PC-9 (cell line): ENCODE measurements at regions of chr21 and their contacts with region 1.

Region 1: DNA sequence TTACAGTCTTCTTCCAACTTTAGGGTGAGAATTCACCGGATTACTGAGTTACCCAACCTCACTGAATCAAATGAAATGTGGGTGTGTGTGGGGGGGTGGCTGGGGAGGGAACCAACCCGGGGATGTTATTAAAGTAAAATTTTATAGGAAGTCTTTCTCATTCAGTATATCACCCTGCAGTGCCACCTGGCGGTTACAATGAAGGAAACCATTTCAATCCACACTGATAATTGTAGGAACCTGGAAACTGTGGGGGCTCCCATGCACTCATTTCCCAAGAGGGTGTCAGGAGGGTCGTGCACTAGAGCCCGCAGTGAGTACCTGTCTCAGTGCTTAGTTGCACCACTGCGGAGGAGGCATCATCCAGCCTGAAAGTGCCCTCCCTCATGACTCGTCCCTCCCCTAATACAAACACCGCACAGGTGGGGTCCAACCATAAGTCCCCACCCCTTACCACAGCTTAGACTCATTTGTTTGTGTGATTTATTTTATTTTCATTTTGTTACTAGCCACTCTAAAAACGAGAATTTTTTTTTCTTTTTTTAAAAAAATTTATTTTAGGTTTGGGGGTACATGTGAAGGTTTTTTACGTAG is 29.1 kb upstream of the IGSF5 start:
- DNase-seq: peak in 1 of 2 experiments; percentile 20
- H3K4me3 ChIP-seq: no peak overlapping the region
- H3K27ac ChIP-seq: no peak overlapping the region
- H3K4me1 ChIP-seq: no peaks in the 10 kb centered on the region
- H3K27me3 ChIP-seq: peaks cover 8% of the 10 kb centered on the region
- CTCF ChIP-seq: peak; percentile 72

Region 2: GRCh38 chr21:39518138-39518846 is 197.6 kb before region 1 on chr21:
- CTCF ChIA-PET with region 1: interaction called, 4 read pairs
- POLR2A ChIA-PET with region 1: no interaction called
- intact Hi-C with region 1: loop called (anchors 1 kb)
- DNase-seq: peak; percentile 38 to 40
- H3K4me3 ChIP-seq: no peak overlapping the region
- H3K27ac ChIP-seq: no peak overlapping the region
- H3K4me1 ChIP-seq: no peaks in the 10 kb centered on the region
- H3K27me3 ChIP-seq: no peaks in the 10 kb centered on the region
- CTCF ChIP-seq: peak; percentile 93

Region 3: GRCh38 chr21:39705849-39706248 is 10.1 kb before region 1 on chr21:
- CTCF ChIA-PET with region 1: no interaction called
- POLR2A ChIA-PET with region 1: no interaction called
- intact Hi-C with region 1: no loop called
- DNase-seq: no peak
- H3K4me3 ChIP-seq: no peak overlapping the region
- H3K27ac ChIP-seq: no peak overlapping the region
- H3K4me1 ChIP-seq: no peaks in the 10 kb centered on the region
- H3K27me3 ChIP-seq: peaks cover 11% of the 10 kb centered on the region
- CTCF ChIP-seq: no peak